PC-3 (cell line): ENCODE measurements at regions of chr11 and their contacts with region 1.

Region 1: DNA sequence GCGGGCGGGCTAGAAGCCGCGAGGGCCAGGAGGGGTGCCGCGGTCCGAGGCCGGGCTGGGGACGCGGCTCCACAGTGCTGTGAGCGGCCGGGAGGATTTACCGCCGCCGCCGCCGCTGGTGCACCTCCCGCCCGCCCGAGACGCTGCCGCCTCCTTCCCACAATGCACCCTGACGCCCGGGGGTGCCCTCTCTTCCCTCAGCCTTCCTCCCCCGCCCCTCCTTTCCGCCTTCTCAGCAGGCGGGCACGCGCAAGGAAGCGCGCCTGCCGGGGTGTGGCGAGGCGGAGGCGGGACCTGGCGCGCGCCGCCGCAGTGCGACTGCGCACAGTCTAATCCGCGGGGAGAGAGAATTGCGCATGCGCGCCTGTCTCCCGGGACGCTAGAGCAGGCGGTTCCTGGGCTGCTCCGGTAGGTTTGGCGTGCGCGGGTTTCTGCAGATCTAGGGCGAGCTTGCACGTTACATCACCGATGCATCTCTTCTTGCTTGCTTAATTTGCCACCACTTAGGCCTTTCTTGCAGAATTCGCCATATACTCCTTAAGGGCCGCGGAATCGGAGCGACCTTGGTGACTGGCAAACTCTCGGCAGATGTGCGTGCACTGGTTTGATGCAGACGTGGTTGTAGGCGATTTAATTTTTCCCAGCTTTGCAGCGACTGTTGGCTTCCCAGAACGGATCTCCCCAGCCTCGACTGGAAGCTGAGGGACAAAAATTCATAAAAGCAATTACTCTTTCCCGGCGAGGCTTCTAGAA is at the starts of genes GVQW3 and THAP12:
- DNase-seq: peak; percentile 99
- ATAC-seq: peak; percentile 88
- H3K4me3 ChIP-seq: peak within 1 kb of the TSS; percentile 73
- H3K27ac ChIP-seq: no peak within 1 kb of the TSS
- H3K4me1 ChIP-seq: peaks cover 21% of the 10 kb centered on the region
- H3K27me3 ChIP-seq: no peaks in the 10 kb centered on the region
- CTCF ChIP-seq: 0 out of 2 replicates have a peak, but pooled peaks have one; percentile 25
- total RNA-seq, gene GVQW3: 1.2 and 3.4 TPM in 2 replicates
- total RNA-seq, gene THAP12: 42.2 and 50.5 TPM in 2 replicates

Region 2: DNA sequence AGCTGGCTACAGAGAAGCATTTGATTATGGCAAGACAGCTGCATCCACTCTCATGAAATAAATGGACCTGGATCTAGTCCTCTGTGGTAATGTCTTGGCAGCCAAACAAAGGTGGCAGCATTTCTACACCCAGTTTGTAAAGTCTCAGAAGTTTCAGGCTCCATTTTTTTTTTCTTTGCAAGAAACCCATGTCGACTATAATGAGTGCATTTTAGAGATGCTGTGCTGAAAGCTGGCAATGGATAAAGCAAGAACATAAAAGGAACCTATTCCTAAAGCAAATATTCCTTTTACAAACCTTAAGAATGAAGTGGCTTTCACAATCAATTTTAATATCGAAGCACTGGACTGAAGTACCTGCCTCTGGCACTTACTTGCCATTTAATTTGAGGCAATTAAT is 33.7 kb before region 1 on chr11:
- CTCF ChIA-PET with region 1: no interaction called
- POLR2A ChIA-PET with region 1: no interaction called
- intact Hi-C with region 1: no loop called
- DNase-seq: no peak
- ATAC-seq: no peak
- H3K4me3 ChIP-seq: no peak overlapping the region
- H3K27ac ChIP-seq: no peak overlapping the region
- H3K4me1 ChIP-seq: no peaks in the 10 kb centered on the region
- H3K27me3 ChIP-seq: no peaks in the 10 kb centered on the region
- CTCF ChIP-seq: no peak

Region 3: DNA sequence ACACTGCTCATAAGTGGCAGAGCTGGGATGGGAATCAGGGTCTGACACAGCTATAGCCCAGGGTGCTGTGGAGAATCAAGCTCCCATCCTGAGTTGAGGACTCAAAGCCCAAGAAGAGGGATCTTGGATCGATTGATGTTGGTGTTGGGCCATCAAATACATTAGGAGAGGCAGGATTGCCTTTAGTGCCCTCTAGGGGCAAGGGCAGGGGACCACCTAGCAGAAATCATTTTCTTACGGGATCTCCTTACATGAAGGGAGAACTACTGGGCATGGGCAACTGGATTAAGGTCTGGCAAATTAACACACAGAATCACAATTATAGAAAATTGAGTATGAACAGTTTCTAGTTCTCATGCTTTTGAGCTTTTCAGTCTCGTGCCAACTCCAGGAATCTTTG is 38.8 kb after region 1 on chr11:
- CTCF ChIA-PET with region 1: no interaction called
- POLR2A ChIA-PET with region 1: no interaction called
- intact Hi-C with region 1: no loop called
- DNase-seq: peak; percentile 32
- ATAC-seq: no peak
- H3K4me3 ChIP-seq: no peak overlapping the region
- H3K27ac ChIP-seq: no peak overlapping the region
- H3K4me1 ChIP-seq: no peaks in the 10 kb centered on the region
- H3K27me3 ChIP-seq: no peaks in the 10 kb centered on the region
- CTCF ChIP-seq: peak; percentile 69

Region 4: GRCh38 chr11:76444384-76445123 is 63.4 kb after region 1 on chr11 and contains the start of gene EMSY:
- CTCF ChIA-PET with region 1: no interaction called
- POLR2A ChIA-PET with region 1: no interaction called
- intact Hi-C with region 1: loop called (anchors 1 kb)
- DNase-seq: peak; percentile 99
- ATAC-seq: peak; percentile 94
- H3K4me3 ChIP-seq: peak within 1 kb of the TSS; percentile 81
- H3K27ac ChIP-seq: peak within 1 kb of the TSS; percentile 66
- H3K4me1 ChIP-seq: peaks cover 13% of the 10 kb centered on the region
- H3K27me3 ChIP-seq: no peaks in the 10 kb centered on the region
- CTCF ChIP-seq: no peak
- total RNA-seq, gene EMSY: 33.0 and 51.1 TPM in 2 replicates